ENCODE measurements at regions of chr11 and their contacts with region 1.

Region 1: DNA sequence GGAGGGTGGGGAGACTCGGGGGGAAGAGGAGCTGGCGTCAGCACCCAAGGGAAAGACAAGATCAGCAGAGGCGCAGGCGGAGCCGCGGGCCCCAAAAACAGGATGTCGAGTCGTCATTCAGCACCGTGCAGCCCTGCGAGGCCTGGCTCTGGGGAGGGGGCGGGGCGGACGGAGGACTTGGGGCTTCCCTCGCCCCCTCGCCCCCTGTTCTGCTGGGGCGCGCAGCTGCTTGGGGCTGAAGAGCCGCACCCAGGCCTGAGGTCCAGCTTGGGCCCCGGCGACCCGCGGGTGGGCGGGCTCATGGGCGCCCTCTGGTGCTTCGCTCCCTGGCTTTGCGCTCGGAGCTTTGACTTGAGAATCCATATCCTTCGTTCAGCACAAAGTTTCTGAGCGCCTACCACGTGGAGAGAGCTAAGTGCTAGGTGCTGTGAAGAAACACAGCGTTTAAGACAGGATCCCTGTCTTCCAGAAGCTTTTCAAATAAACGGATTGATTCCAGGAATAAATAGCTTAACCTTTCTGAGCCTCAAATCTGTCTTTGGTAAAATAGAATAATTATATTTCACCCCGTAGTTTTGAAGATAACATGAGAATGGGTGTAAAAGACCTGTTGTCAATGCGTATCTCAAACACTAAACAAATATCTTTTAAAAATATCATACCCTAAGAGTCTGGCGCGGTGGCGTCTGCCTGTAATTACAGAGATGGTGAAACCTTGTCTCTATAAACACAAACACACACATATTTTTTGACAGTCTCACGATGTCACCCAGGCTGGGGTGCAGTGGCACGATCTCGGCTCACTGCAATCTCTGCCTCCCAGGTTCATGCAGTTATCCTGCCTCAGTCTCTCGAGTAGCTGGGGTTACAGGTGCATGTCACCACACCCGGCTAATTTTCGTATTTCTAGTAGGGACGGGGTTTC is 929 bp upstream of the RHOG start:
- DNase-seq: peak; percentile 95

Region 2: GRCh38 chr11:3797329-3798095 is 44.2 kb before region 1 on chr11 and contains the start of gene NUP98:
- intact Hi-C with region 1: loop called (anchors 1 kb)
- DNase-seq: peak; percentile 100
- total RNA-seq, gene NUP98: 49.6 TPM

Measured in cardiac septum (tissue), 1 donor.